CD8-positive, alpha-beta T cell (primary cell): ENCODE measurements at regions of chr1 and their contacts with region 1.

Region 1: GRCh38 chr1:45499415-45499769 is 481 bp downstream of the CCDC163 start:
- DNase-seq: peak in 1 of 9 experiments; percentile 55
- ATAC-seq: no peak
- H3K4me3 ChIP-seq: peak overlapping the region; percentile 59 to 83
- H3K4me3 Mint-ChIP-seq: peak overlapping the region; percentile 93
- H3K27ac ChIP-seq: peak overlapping the region; percentile 39 to 76
- H3K27ac Mint-ChIP-seq: peak overlapping the region; percentile 90
- H3K4me1 ChIP-seq: peaks cover 20% of the 10 kb centered on the region
- H3K4me1 Mint-ChIP-seq: peaks cover 37% of the 10 kb centered on the region
- H3K27me3 ChIP-seq: no peaks in the 10 kb centered on the region
- H3K27me3 Mint-ChIP-seq: no peaks in the 10 kb centered on the region
- CTCF ChIP-seq: no peak

Region 2: DNA sequence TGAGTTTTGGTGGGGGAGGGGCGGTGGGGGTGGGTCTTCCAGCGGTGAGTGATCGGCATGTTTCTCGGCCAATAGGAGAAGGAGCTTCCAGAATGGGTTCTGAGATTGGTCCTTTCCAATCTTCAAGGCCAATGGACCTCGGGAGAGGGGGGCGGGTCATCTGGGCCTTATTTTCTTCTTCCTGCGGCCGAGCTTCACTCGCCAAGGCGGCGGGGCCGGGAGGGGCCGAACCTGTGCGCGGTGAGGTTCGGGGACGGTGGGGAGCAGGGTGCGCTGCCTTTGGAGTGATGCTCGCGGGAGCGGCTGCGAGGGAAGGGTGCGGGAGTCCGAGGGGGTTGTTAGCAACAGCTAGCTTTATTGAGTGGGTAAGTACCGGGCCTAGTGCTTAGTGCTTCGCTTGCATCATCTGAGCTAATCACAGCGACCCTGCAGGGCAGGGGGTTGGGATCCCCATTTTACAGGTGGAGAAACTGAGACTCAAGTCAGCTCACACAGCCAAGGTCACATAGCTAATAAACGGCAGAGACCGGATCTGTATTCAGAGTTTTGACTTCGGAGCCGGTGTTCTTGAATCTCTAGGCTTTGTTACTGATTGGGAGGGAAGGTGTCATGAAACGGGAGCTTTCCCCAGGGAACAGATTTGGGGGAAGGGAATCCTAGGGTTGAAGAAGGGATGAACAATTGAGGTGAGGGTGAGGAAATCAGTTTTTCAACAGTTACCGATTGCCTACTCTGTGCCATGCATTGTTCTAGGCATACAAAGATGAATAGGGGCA is 1848.9 kb before region 1 on chr1:
- CTCF ChIA-PET with region 1: no interaction called
- POLR2A ChIA-PET with region 1: no interaction called
- intact Hi-C with region 1: loop called in 1 of 2 experiments (anchors 5 kb)
- DNase-seq: peak in 8 of 9 experiments; percentile 74 to 97 (median 89)
- ATAC-seq: peak; percentile 71
- H3K4me3 ChIP-seq: peak overlapping the region; percentile 87 to 92
- H3K4me3 Mint-ChIP-seq: peak overlapping the region; percentile 100
- H3K27ac ChIP-seq: peak overlapping the region; percentile 49 to 86
- H3K27ac Mint-ChIP-seq: peak overlapping the region; percentile 97
- H3K4me1 ChIP-seq: peaks cover 17% of the 10 kb centered on the region
- H3K4me1 Mint-ChIP-seq: peaks cover 41% of the 10 kb centered on the region
- H3K27me3 ChIP-seq: no peaks in the 10 kb centered on the region
- H3K27me3 Mint-ChIP-seq: no peaks in the 10 kb centered on the region
- CTCF ChIP-seq: no peak

Region 3: DNA sequence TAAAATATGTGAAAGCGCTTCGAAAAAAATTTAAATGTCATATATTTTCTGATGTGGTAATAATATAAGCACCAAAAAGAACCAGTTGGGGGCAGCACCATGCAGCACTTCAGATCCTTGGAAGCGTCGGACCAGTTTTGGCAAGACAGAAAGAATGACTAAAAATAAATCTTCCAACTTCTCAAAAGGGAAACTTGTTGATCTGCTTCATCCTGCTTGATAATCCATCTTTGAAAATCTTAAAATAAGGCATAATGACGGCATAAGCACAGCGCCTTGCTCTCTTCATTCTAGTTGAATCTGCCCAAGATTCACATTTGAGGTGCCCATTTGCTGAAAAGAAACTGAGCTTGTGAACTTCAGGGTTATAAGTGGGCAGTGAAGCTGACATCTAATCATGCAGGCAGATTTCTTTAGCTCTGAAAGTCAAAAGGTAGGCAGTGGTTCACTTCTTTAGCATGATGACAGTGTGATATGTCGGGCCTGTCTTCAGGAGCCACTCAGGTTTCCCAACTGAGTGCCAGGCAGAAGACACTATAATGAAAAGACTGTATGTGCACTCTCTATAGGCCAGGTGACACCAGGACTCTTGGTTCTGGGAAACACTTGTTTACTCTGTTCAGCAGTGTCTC is 139.4 kb before region 1 on chr1:
- CTCF ChIA-PET with region 1: interaction called, 182 read pairs
- POLR2A ChIA-PET with region 1: no interaction called
- intact Hi-C with region 1: no loop called
- DNase-seq: peak in 7 of 9 experiments; percentile 16 to 70 (median 47)
- ATAC-seq: peak; percentile 55
- H3K4me3 ChIP-seq: no peak overlapping the region
- H3K4me3 Mint-ChIP-seq: no peak overlapping the region
- H3K27ac ChIP-seq: no peak overlapping the region
- H3K27ac Mint-ChIP-seq: no peak overlapping the region
- H3K4me1 ChIP-seq: no peaks in the 10 kb centered on the region
- H3K4me1 Mint-ChIP-seq: peaks cover 6% of the 10 kb centered on the region
- H3K27me3 ChIP-seq: no peaks in the 10 kb centered on the region
- H3K27me3 Mint-ChIP-seq: no peaks in the 10 kb centered on the region
- CTCF ChIP-seq: peak; percentile 55

Region 4: GRCh38 chr1:45521398-45522323 is 22.3 kb after region 1 on chr1 and contains the start of gene PRDX1:
- CTCF ChIA-PET with region 1: interaction called, 5 read pairs
- POLR2A ChIA-PET with region 1: interaction called, 27 read pairs
- intact Hi-C with region 1: loop called (anchors 1 to 2 kb)
- DNase-seq: peak; percentile 90 to 98 (median 93)
- ATAC-seq: peak; percentile 90
- H3K4me3 ChIP-seq: peak within 1 kb of the TSS; percentile 86 to 99
- H3K4me3 Mint-ChIP-seq: peak within 1 kb of the TSS; percentile 94
- H3K27ac ChIP-seq: peak within 1 kb of the TSS; percentile 75 to 78
- H3K27ac Mint-ChIP-seq: peak within 1 kb of the TSS; percentile 90
- H3K4me1 ChIP-seq: peaks cover 15% of the 10 kb centered on the region
- H3K4me1 Mint-ChIP-seq: peaks cover 26% of the 10 kb centered on the region
- H3K27me3 ChIP-seq: peaks cover 0 to 3% of the 10 kb centered on the region in 2 experiments
- H3K27me3 Mint-ChIP-seq: no peaks in the 10 kb centered on the region
- CTCF ChIP-seq: no peak
- total RNA-seq, gene PRDX1: 20.4 to 27.0 TPM

Region 5: DNA sequence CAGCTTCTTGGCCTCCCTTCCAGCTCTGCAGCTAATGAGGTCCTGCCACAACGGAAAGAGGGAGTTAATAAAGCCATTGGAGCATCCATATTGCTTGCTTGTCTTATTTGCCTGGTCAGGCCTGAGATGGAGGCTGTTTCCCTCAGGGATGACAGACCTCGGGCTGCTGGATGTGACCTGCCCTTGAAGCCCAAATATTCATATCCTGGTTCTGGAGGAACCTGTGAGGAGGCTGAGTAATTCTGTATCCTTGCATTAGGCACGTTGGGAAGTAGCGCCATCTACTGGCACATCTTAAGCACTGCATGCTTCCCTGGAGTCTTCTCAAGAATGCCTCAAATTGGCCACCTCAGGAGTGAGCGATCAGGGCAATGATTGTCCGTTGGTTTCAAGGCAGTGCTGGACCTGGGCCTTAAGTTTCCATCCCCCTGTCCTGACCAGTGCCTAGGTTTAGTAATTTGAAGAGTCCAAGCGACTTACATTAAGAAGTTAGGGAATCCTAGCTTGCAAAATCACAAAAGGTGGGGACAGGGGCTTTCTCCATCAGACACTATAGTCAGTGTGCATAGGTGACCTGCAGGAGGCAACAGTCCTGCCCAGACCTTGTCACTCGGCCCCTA is 70.7 kb after region 1 on chr1:
- CTCF ChIA-PET with region 1: interaction called, 20 read pairs
- POLR2A ChIA-PET with region 1: interaction called, 3 read pairs
- intact Hi-C with region 1: no loop called
- DNase-seq: peak; percentile 33 to 83 (median 72)
- ATAC-seq: peak; percentile 99
- H3K4me3 ChIP-seq: no peak overlapping the region
- H3K4me3 Mint-ChIP-seq: no peak overlapping the region
- H3K27ac ChIP-seq: no peak overlapping the region
- H3K27ac Mint-ChIP-seq: peak overlapping the region; percentile 22
- H3K4me1 ChIP-seq: no peaks in the 10 kb centered on the region
- H3K4me1 Mint-ChIP-seq: no peaks in the 10 kb centered on the region
- H3K27me3 ChIP-seq: no peaks in the 10 kb centered on the region
- H3K27me3 Mint-ChIP-seq: no peaks in the 10 kb centered on the region
- CTCF ChIP-seq: peak; percentile 92